ENCODE measurements at regions of chr16 and their contacts with region 1.

Region 1: GRCh38 chr16:30775392-30776188 is 11.4 kb downstream of the ZNF629 start:
- DNase-seq: peak; percentile 77 to 94
- H3K4me3 ChIP-seq: peak overlapping the region; percentile 62
- CTCF ChIP-seq: no peak
- POLR2A ChIP-seq: no peak

Region 2: GRCh38 chr16:30724641-30725417 is 50.8 kb before region 1 on chr16:
- intact Hi-C with region 1: loop called (anchors 10 kb)
- DNase-seq: no peak
- H3K4me3 ChIP-seq: no peak overlapping the region
- CTCF ChIP-seq: no peak
- POLR2A ChIP-seq: no peak